ENCODE measurements at regions of chr5 and their contacts with region 1.

Region 1: GRCh38 chr5:68962757-68963484 is 130.9 kb upstream of the SLC30A5 start:
- DNase-seq: peak; percentile 52 to 84 (median 70)
- ATAC-seq: peak; percentile 88
- H3K4me3 ChIP-seq: no peak overlapping the region
- H3K27ac ChIP-seq: no peak overlapping the region
- H3K4me1 ChIP-seq: no peaks in the 10 kb centered on the region
- H3K27me3 ChIP-seq: no peaks in the 10 kb centered on the region

Region 2: GRCh38 chr5:68169903-68170656 is 792.8 kb before region 1 on chr5:
- intact Hi-C with region 1: no loop called
- DNase-seq: peak in 1 of 3 donors; percentile 75
- ATAC-seq: peak in 1 of 2 donors; percentile 59
- H3K4me3 ChIP-seq: no peak overlapping the region
- H3K27ac ChIP-seq: no peak overlapping the region
- H3K4me1 ChIP-seq: peaks cover 8% of the 10 kb centered on the region
- H3K27me3 ChIP-seq: no peaks in the 10 kb centered on the region

Region 3: GRCh38 chr5:68460147-68460798 is 502.6 kb before region 1 on chr5:
- intact Hi-C with region 1: loop called in 1 of 4 experiments (anchors 10 kb)
- DNase-seq: no peak
- ATAC-seq: peak in 1 of 2 donors; percentile 65
- H3K4me3 ChIP-seq: no peak overlapping the region
- H3K27ac ChIP-seq: no peak overlapping the region
- H3K4me1 ChIP-seq: peaks cover 2% of the 10 kb centered on the region
- H3K27me3 ChIP-seq: no peaks in the 10 kb centered on the region

Region 4: GRCh38 chr5:68872088-68872839 is 90.7 kb before region 1 on chr5:
- intact Hi-C with region 1: no loop called
- DNase-seq: no peak
- ATAC-seq: no peak
- H3K4me3 ChIP-seq: no peak overlapping the region
- H3K27ac ChIP-seq: no peak overlapping the region
- H3K4me1 ChIP-seq: no peaks in the 10 kb centered on the region
- H3K27me3 ChIP-seq: no peaks in the 10 kb centered on the region